ENCODE measurements at regions of chr12 and their contacts with region 1.

Region 1: DNA sequence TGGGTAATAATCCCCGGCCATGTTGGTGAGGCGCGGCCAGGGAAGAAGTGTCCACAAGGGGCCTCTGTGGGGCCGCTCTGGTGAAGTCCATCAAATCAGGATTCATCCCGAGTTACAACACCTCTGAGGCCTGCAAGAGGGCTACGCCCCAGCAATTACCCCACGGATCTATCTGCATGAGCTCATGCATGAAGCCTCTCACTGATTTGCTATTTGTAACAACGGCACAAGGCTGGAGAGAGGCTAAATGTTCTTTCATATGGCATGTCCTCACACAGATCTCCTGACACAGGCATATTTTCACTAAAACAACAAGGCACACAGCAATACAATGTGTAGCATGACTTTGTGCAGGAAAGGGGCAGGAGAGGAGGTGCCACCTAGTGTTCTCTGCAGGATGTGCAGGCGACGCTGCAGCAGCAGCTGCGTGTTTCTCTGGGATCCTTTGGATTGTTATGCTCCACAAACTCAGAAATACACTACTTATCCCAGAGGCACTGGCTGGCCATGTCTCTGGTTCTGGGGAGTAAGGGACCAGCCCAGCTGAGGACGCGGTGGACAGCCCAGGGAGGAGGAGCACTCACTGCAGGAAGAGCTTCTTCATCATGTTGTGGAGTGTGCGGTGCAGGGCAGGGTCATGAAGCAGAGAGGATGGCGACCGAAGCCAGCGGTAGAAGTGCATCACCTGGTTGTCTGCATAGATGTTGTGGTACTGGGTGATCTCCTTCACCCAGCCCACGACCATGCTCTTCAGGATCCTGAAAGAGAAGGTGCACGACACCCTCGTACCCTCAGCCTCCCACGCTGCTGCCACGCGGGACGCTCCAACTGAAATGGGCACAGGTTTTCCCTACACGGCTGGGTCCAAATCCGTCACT is 20.2 kb downstream of the P2RX2 start:
- DNase-seq: peak in 1 of 2 experiments; percentile 41
- H3K4me3 ChIP-seq: no peak overlapping the region
- H3K27ac ChIP-seq: no peak overlapping the region
- H3K4me1 ChIP-seq: no peaks in the 10 kb centered on the region
- H3K27me3 ChIP-seq: no peaks in the 10 kb centered on the region
- CTCF ChIP-seq: peak; percentile 83

Region 2: GRCh38 chr12:132393991-132394949 is 244.5 kb before region 1 on chr12:
- CTCF ChIA-PET with region 1: no interaction called
- POLR2A ChIA-PET with region 1: no interaction called
- intact Hi-C with region 1: no loop called
- DNase-seq: peak in 1 of 2 experiments; percentile 35
- H3K4me3 ChIP-seq: no peak overlapping the region
- H3K27ac ChIP-seq: no peak overlapping the region
- H3K4me1 ChIP-seq: no peaks in the 10 kb centered on the region
- H3K27me3 ChIP-seq: peaks cover 63% of the 10 kb centered on the region
- CTCF ChIP-seq: no peak

Region 3: GRCh38 chr12:132600048-132601032 is 38.4 kb before region 1 on chr12:
- CTCF ChIA-PET with region 1: no interaction called
- POLR2A ChIA-PET with region 1: no interaction called
- intact Hi-C with region 1: loop called (anchors 1 kb)
- DNase-seq: peak; percentile 48 to 72
- H3K4me3 ChIP-seq: peak overlapping the region; percentile 47; the same call in 1 of the 2 replicates
- H3K27ac ChIP-seq: no peak overlapping the region
- H3K4me1 ChIP-seq: no peaks in the 10 kb centered on the region; the same call in 1 of the 2 replicates
- H3K27me3 ChIP-seq: peaks cover 48% of the 10 kb centered on the region
- CTCF ChIP-seq: peak; percentile 65

Region 4: DNA sequence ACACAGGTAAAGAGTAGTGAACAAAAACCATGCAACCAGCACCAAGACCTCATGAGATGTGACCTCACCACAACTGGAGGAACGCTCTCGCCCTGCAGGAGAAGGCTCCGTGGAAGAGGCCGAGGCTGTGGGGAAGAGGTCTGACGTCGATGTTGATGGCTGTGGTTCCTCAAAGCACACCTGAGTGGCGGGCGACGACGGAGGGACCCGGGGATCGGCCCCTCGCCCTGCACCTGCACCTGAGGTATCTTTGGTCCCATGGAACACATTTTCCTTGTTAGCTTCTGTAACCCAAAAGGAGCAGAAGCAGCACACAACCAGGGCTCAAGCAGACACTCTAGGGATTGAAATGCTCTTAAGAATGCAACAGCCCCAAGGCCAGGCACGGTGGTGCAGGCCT is 230.8 kb after region 1 on chr12:
- CTCF ChIA-PET with region 1: interaction called, 13 read pairs
- POLR2A ChIA-PET with region 1: no interaction called
- intact Hi-C with region 1: no loop called
- DNase-seq: no peak
- H3K4me3 ChIP-seq: no peak overlapping the region
- H3K27ac ChIP-seq: no peak overlapping the region
- H3K4me1 ChIP-seq: no peaks in the 10 kb centered on the region
- H3K27me3 ChIP-seq: no peaks in the 10 kb centered on the region
- CTCF ChIP-seq: no peak